ENCODE measurements at regions of chr14 and their contacts with region 1.

Region 1: GRCh38 chr14:22570132-22570949 is 18.7 kb downstream of the DAD1 start:
- DNase-seq: peak; percentile 97
- ATAC-seq: peak; percentile 90
- H3K4me3 ChIP-seq: peak overlapping the region; percentile 25 to 60 (median 37)
- H3K4me3 Mint-ChIP-seq: peak overlapping the region; percentile 44
- H3K27ac ChIP-seq: peak overlapping the region; percentile 74 to 78
- H3K27ac Mint-ChIP-seq: peak overlapping the region; percentile 54
- H3K4me1 ChIP-seq: peaks cover 46 to 53% of the 10 kb centered on the region in 2 donors
- H3K4me1 Mint-ChIP-seq: peaks cover 47% of the 10 kb centered on the region
- H3K27me3 ChIP-seq: no peaks in the 10 kb centered on the region
- H3K27me3 Mint-ChIP-seq: no peaks in the 10 kb centered on the region
- CTCF ChIP-seq: peak; percentile 97

Region 2: GRCh38 chr14:21543521-21543960 is 1026.8 kb before region 1 on chr14:
- CTCF ChIA-PET with region 1: no interaction called
- POLR2A ChIA-PET with region 1: no interaction called
- intact Hi-C with region 1: no loop called
- DNase-seq: no peak
- ATAC-seq: no peak
- H3K4me3 ChIP-seq: no peak overlapping the region
- H3K4me3 Mint-ChIP-seq: no peak overlapping the region
- H3K27ac ChIP-seq: no peak overlapping the region
- H3K27ac Mint-ChIP-seq: no peak overlapping the region
- H3K4me1 ChIP-seq: no peaks in the 10 kb centered on the region
- H3K4me1 Mint-ChIP-seq: no peaks in the 10 kb centered on the region
- H3K27me3 ChIP-seq: peaks cover 0 to 9% (median 6%) of the 10 kb centered on the region in 4 experiments
- H3K27me3 Mint-ChIP-seq: peaks cover 30% of the 10 kb centered on the region
- CTCF ChIP-seq: no peak

Region 3: DNA sequence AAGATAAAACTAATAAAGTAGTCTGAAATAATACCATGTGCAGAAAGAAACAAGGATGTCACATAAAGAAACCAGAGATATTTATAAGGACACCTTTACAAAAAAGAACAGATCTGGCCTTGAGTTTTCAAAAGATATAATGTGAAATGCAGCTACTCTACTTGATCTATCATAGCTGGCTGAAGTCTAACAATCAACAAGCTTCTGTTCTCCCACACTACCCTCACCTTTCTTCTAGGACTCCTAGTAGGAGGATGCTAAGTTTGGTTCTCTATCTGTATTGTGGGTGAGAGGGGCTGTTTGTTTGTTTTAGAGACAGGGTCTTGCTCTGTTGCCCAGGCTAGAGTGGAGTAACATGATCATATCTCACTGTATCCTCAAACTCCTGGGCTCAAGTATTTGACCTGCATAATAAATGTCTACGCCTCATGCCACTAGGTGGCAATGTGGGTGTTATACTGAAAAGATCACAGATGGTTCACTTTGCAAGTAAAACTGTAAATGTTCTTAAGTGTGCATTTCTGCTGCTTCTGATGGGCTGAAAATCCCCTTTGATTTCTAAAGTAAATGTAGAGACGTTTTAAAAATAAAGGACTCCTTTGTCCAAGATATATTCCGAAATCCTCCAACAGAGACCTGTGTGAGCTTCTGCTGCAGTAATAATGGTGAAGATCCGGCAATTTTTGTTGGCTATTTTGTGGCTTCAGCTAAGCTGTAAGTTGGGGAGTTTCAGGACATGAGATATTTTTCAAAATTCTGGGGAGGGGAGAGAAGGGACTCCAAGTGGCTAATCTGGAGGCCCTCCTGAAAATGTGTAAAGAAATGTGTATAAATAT is 250.6 kb before region 1 on chr14:
- CTCF ChIA-PET with region 1: interaction called, 48 read pairs
- POLR2A ChIA-PET with region 1: interaction called, 3 read pairs
- intact Hi-C with region 1: loop called (anchors 1 kb)
- DNase-seq: peak; percentile 69
- ATAC-seq: peak; percentile 70
- H3K4me3 ChIP-seq: no peak overlapping the region
- H3K4me3 Mint-ChIP-seq: no peak overlapping the region
- H3K27ac ChIP-seq: no peak overlapping the region
- H3K27ac Mint-ChIP-seq: no peak overlapping the region
- H3K4me1 ChIP-seq: no peaks in the 10 kb centered on the region
- H3K4me1 Mint-ChIP-seq: peaks cover 3% of the 10 kb centered on the region
- H3K27me3 ChIP-seq: no peaks in the 10 kb centered on the region
- H3K27me3 Mint-ChIP-seq: peaks cover 5% of the 10 kb centered on the region
- CTCF ChIP-seq: peak; percentile 87

Region 4: DNA sequence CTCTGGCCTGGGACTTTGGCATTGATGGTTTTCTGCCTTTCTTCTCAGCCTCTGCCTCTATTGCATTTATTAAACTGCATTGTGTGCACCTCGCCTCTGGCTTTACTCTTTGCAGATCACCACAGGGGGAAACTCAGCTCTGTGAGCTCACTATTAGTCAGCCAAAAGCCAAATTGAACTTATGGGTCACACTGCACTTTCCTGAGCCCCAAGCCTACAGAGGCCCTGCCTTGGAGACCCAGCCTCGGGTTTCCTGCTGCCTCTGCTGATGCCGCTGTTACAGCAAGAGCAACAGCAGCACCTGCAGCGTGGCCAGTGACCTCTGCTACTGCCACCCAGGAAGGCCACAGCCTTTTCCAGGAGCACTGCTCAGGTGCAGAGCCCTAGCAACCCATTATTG is 103.8 kb before region 1 on chr14:
- CTCF ChIA-PET with region 1: interaction called, 177 read pairs
- POLR2A ChIA-PET with region 1: no interaction called
- intact Hi-C with region 1: no loop called
- DNase-seq: no peak
- ATAC-seq: no peak
- H3K4me3 ChIP-seq: no peak overlapping the region
- H3K4me3 Mint-ChIP-seq: no peak overlapping the region
- H3K27ac ChIP-seq: no peak overlapping the region
- H3K27ac Mint-ChIP-seq: peak overlapping the region; percentile 16
- H3K4me1 ChIP-seq: peaks cover 30 to 48% of the 10 kb centered on the region in 2 donors
- H3K4me1 Mint-ChIP-seq: peaks cover 62% of the 10 kb centered on the region
- H3K27me3 ChIP-seq: no peaks in the 10 kb centered on the region
- H3K27me3 Mint-ChIP-seq: no peaks in the 10 kb centered on the region
- CTCF ChIP-seq: no peak

Region 5: GRCh38 chr14:22531451-22532344 is 38.6 kb before region 1 on chr14:
- CTCF ChIA-PET with region 1: interaction called, 17 read pairs
- POLR2A ChIA-PET with region 1: no interaction called
- intact Hi-C with region 1: no loop called
- DNase-seq: peak; percentile 79
- ATAC-seq: peak; percentile 79
- H3K4me3 ChIP-seq: peak overlapping the region; percentile 23 to 51 (median 32)
- H3K4me3 Mint-ChIP-seq: peak overlapping the region; percentile 79
- H3K27ac ChIP-seq: peak overlapping the region; percentile 89 to 90
- H3K27ac Mint-ChIP-seq: peak overlapping the region; percentile 93
- H3K4me1 ChIP-seq: peaks cover 49 to 63% of the 10 kb centered on the region in 2 donors
- H3K4me1 Mint-ChIP-seq: peaks cover 86% of the 10 kb centered on the region
- H3K27me3 ChIP-seq: no peaks in the 10 kb centered on the region
- H3K27me3 Mint-ChIP-seq: no peaks in the 10 kb centered on the region
- CTCF ChIP-seq: no peak

Region 6: GRCh38 chr14:22653012-22653621 is 82.8 kb after region 1 on chr14:
- CTCF ChIA-PET with region 1: interaction called, 68 read pairs
- POLR2A ChIA-PET with region 1: interaction called, 4 read pairs
- intact Hi-C with region 1: loop called (anchors 1 kb)
- DNase-seq: peak; percentile 55
- ATAC-seq: peak; percentile 60
- H3K4me3 ChIP-seq: no peak overlapping the region
- H3K4me3 Mint-ChIP-seq: no peak overlapping the region
- H3K27ac ChIP-seq: no peak overlapping the region
- H3K27ac Mint-ChIP-seq: no peak overlapping the region
- H3K4me1 ChIP-seq: no peaks in the 10 kb centered on the region
- H3K4me1 Mint-ChIP-seq: no peaks in the 10 kb centered on the region
- H3K27me3 ChIP-seq: peaks cover 0 to 3% (median 0%) of the 10 kb centered on the region in 4 experiments
- H3K27me3 Mint-ChIP-seq: no peaks in the 10 kb centered on the region
- CTCF ChIP-seq: peak; percentile 73

Region 7: DNA sequence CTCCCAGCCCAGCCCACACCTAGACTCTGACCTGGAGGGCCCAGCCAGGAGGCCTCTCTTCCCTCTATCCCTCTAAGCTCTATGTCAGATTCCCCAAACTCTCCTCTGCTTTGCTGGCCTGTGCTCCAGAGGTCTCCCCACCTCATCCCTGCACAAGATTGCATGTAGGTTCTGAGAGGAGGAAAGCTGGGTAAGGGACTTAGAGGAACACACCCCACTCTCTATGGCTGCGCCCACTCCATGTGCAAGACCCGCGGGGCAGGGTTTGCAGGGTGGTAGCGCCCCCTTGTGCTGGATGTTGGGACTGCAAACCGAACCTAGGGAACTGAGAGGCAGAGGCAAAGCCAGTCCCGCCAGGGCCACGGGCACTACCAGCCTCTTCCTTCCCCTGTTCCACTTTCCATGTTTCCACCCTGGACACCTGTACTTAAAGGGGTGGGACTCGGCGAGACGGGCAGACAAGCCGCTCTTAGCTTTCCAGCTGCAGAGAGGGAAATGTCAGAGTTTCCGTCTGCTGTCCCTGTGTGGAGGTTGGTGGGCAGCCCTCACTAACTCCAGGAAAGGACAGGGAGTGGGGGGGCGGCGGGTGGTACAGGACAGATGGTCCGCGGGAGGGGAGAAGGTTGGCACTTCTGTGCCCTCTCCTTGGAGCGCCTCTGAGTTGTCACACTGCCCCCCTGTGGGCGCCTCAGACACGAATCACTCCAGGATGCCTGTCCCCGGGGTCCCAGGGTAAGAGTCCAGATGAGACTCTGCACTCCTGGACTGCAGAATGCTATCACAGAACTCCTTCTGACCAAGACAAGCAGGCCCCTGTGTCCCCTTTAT is 282.8 kb after region 1 on chr14:
- CTCF ChIA-PET with region 1: interaction called, 190 read pairs
- POLR2A ChIA-PET with region 1: interaction called, 6 read pairs
- intact Hi-C with region 1: loop called (anchors 1 kb)
- DNase-seq: peak; percentile 91
- ATAC-seq: peak; percentile 95
- H3K4me3 ChIP-seq: peak overlapping the region; percentile 49 to 72 (median 63)
- H3K4me3 Mint-ChIP-seq: peak overlapping the region; percentile 88
- H3K27ac ChIP-seq: peak overlapping the region in 1 of 2 donors; percentile 42
- H3K27ac Mint-ChIP-seq: peak overlapping the region; percentile 85
- H3K4me1 ChIP-seq: peaks cover 0 to 8% of the 10 kb centered on the region in 2 donors
- H3K4me1 Mint-ChIP-seq: peaks cover 6% of the 10 kb centered on the region
- H3K27me3 ChIP-seq: peaks cover 0 to 5% (median 0%) of the 10 kb centered on the region in 4 experiments
- H3K27me3 Mint-ChIP-seq: peaks cover 6% of the 10 kb centered on the region
- CTCF ChIP-seq: peak; percentile 87

Region 8: GRCh38 chr14:23057757-23058653 is 487.7 kb after region 1 on chr14:
- CTCF ChIA-PET with region 1: interaction called, 17 read pairs
- POLR2A ChIA-PET with region 1: interaction called, 4 read pairs
- intact Hi-C with region 1: loop called (anchors 5 kb)
- DNase-seq: peak; percentile 89
- ATAC-seq: peak; percentile 64
- H3K4me3 ChIP-seq: peak overlapping the region; percentile 11 to 91 (median 68)
- H3K4me3 Mint-ChIP-seq: peak overlapping the region; percentile 95
- H3K27ac ChIP-seq: no peak overlapping the region
- H3K27ac Mint-ChIP-seq: peak overlapping the region; percentile 76
- H3K4me1 ChIP-seq: peaks cover 10 to 21% of the 10 kb centered on the region in 2 donors
- H3K4me1 Mint-ChIP-seq: peaks cover 18% of the 10 kb centered on the region
- H3K27me3 ChIP-seq: peaks cover 0 to 6% (median 0%) of the 10 kb centered on the region in 4 experiments
- H3K27me3 Mint-ChIP-seq: no peaks in the 10 kb centered on the region
- CTCF ChIP-seq: peak; percentile 95

Measured in B cell (primary cell).